Activated CD4-positive, alpha-beta T cell treated with anti-CD3 and anti-CD28 coated beads, Interleukin-2, amount 10 ng/mL, durations not matched to agents 24 days and 14 days (primary cell): ENCODE measurements at regions of chr5 and their contacts with region 1.

Region 1: GRCh38 chr5:1004461-1005248 is 3.9 kb upstream of the NKD2 start:
- DNase-seq: peak; percentile 86
- H3K4me3 Mint-ChIP-seq: peak overlapping the region; percentile 74
- H3K27ac Mint-ChIP-seq: no peak overlapping the region
- H3K4me1 Mint-ChIP-seq: peaks cover 9% of the 10 kb centered on the region
- H3K27me3 Mint-ChIP-seq: peaks cover 40% of the 10 kb centered on the region

Region 2: DNA sequence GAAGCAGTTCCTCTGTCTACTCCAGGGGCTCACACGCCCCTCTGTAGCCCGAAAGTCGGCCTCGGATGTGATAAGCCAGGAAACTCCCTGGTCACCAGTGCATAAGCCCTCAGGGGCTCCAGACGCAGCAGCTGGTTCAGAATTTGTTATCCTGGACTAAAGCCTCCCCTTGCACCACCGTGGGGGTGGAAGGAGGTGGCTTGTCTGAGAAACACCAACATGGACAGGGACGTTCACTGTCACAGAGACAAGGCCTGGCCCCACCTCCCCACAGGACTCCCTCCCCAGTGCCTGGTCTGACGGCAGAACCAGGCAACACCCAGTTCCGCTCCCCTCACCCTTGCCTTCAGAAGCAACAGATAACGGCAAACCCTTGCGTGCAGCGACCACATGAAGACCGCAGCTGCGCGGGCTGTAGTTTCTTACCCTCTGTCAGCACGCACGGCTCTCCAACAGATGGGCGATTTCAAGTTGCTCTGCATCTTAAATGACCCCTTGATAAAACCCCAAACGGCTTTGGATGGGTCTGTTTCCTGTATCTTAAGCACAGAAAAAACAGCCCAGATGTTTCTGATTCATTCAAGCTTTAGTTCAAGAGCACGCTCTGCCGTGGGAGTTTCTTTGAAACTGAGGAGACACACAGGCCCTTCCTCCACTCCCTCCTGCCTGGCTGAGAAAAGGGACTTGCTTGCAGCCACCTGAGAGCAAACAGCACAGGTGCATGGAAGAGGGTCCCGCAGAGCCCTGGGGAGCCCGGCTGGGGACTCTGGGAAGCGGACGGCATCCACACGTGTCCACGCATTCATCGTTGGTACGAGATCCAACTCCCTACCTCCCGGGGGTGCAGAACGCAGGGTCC is 40.8 kb before region 1 on chr5:
- intact Hi-C with region 1: loop called (anchors 5 kb)
- DNase-seq: peak; percentile 91
- H3K4me3 Mint-ChIP-seq: peak overlapping the region; percentile 84
- H3K27ac Mint-ChIP-seq: peak overlapping the region; percentile 96
- H3K4me1 Mint-ChIP-seq: peaks cover 43% of the 10 kb centered on the region
- H3K27me3 Mint-ChIP-seq: peaks cover 21% of the 10 kb centered on the region

Region 3: GRCh38 chr5:1105350-1106265 is 101.0 kb after region 1 on chr5:
- intact Hi-C with region 1: loop called (anchors 5 kb)
- DNase-seq: peak; percentile 94
- H3K4me3 Mint-ChIP-seq: peak overlapping the region; percentile 82
- H3K27ac Mint-ChIP-seq: peak overlapping the region; percentile 83
- H3K4me1 Mint-ChIP-seq: peaks cover 62% of the 10 kb centered on the region
- H3K27me3 Mint-ChIP-seq: no peaks in the 10 kb centered on the region

Region 4: DNA sequence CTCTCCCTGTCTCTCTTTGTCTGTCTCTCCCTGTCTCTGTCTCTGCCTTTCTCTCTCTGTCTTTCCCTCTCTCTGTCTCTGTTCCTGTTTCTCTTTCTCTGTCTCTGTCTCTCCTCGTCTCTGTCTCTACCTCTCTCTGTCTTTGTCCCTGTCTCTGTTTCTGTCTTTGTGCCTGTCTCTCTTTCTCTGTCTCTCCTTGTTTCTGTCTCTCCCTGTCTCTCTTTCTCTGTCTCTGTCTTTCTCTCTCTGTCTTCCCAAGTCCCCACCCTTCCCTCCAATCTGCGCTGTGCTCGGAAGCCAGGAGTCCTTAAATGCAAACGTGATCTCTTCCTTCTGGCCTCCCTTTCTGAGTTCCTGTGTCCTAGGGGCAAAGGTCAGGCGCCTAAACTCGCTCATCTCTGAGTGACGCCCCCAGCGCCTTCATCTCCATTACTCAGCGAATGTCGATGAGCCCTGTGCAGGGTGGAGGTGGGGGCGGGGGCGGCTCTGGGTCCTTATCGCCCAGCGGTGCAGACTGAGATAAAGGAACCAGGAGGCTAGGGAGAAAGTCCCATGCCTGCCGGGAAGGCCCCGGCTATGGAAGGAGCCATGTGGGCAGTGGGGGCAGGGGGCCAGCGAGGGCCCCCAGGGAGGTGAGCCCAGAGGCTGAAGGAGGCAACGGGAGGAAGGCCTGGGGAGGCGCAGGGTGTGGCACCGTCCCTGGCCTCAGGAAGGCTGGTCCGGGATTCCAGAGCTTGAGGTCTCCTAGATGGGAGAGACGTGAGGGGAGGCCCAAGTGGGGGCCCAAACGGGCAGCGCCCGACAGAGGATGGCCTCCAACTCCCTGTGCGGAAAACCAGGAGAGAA is 195.2 kb after region 1 on chr5:
- intact Hi-C with region 1: no loop called
- DNase-seq: no peak
- H3K4me3 Mint-ChIP-seq: no peak overlapping the region
- H3K27ac Mint-ChIP-seq: no peak overlapping the region
- H3K4me1 Mint-ChIP-seq: no peaks in the 10 kb centered on the region
- H3K27me3 Mint-ChIP-seq: peaks cover 2% of the 10 kb centered on the region

Region 5: GRCh38 chr5:1851290-1851934 is 846.8 kb after region 1 on chr5:
- intact Hi-C with region 1: no loop called
- DNase-seq: no peak
- H3K4me3 Mint-ChIP-seq: no peak overlapping the region
- H3K27ac Mint-ChIP-seq: no peak overlapping the region
- H3K4me1 Mint-ChIP-seq: no peaks in the 10 kb centered on the region
- H3K27me3 Mint-ChIP-seq: peaks cover 49% of the 10 kb centered on the region